PC-9 (cell line): ENCODE measurements at regions of chr18 and their contacts with region 1.

Region 1: GRCh38 chr18:63422087-63422809 is at the start of gene VPS4B:
- DNase-seq: peak; percentile 96 to 97
- H3K4me3 ChIP-seq: peak within 1 kb of the TSS; percentile 73
- H3K27ac ChIP-seq: peak within 1 kb of the TSS; percentile 88
- H3K4me1 ChIP-seq: peaks cover 26% of the 10 kb centered on the region
- H3K27me3 ChIP-seq: no peaks in the 10 kb centered on the region
- CTCF ChIP-seq: no peak
- total RNA-seq, gene VPS4B: 52.4 and 59.7 TPM in 2 replicates

Region 2: GRCh38 chr18:63367053-63367953 is 54.9 kb before region 1 on chr18 and contains the start of gene KDSR:
- CTCF ChIA-PET with region 1: no interaction called
- POLR2A ChIA-PET with region 1: interaction called, 4 read pairs
- intact Hi-C with region 1: loop called (anchors 1 kb)
- DNase-seq: peak; percentile 94 to 95
- H3K4me3 ChIP-seq: peak within 1 kb of the TSS; percentile 99
- H3K27ac ChIP-seq: peak within 1 kb of the TSS; percentile 71
- H3K4me1 ChIP-seq: peaks cover 20% of the 10 kb centered on the region
- H3K27me3 ChIP-seq: no peaks in the 10 kb centered on the region
- CTCF ChIP-seq: no peak
- total RNA-seq, gene KDSR: 33.8 and 41.7 TPM in 2 replicates